ENCODE measurements at regions of chr1 and their contacts with region 1.

Region 1: GRCh38 chr1:23777979-23778814 is at the start of gene PITHD1:
- DNase-seq: peak; percentile 56 to 76
- H3K4me3 ChIP-seq: peak within 1 kb of the TSS; percentile 90
- H3K27ac ChIP-seq: peak within 1 kb of the TSS; percentile 81
- H3K4me1 ChIP-seq: peaks cover 29% of the 10 kb centered on the region
- H3K27me3 ChIP-seq: no peaks in the 10 kb centered on the region
- CTCF ChIP-seq: no peak
- total RNA-seq, gene PITHD1: 38.5 and 39.7 TPM in 2 replicates

Region 2: DNA sequence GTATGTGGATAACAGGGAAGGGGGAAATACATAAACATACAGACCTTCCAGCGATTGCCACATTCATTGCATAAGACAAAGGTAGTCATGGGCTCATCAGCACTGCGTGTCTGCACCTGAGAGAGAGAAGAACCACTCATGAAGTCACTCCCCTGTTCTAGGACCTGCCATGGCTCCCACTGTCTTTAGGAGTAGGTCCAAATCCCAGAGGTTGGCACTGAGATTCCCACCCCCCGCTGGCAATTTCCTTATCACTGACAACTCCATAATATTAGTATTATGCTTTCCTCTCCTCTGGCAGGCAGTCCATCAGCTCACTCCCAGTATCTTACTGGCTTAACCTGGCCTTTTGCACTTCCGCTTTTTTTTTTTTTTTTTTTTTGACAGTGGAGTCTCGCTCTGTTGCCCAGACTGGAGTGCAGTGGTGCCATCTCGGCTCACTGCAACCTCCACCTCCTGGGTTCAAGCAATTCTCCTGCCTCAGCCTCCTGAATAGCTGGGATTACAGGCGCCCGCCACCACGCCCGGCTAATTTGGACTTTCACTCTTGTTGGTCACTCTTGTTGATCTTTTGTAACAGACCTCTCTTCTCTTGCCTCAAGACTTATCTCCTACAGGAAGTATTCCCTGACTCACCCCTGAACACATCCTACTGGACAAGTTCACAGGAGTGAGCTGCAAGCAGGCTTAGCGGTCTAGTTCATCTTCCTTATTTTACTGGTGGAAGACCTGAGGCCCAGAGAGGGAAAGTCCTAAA is 393.7 kb before region 1 on chr1:
- CTCF ChIA-PET with region 1: interaction called, 11 read pairs
- POLR2A ChIA-PET with region 1: no interaction called
- intact Hi-C with region 1: no loop called
- DNase-seq: peak in 1 of 2 experiments; percentile 84
- H3K4me3 ChIP-seq: no peak overlapping the region
- H3K27ac ChIP-seq: no peak overlapping the region
- H3K4me1 ChIP-seq: peaks cover 6% of the 10 kb centered on the region; the same call in 1 of the 2 replicates
- H3K27me3 ChIP-seq: no peaks in the 10 kb centered on the region
- CTCF ChIP-seq: no peak

Region 3: DNA sequence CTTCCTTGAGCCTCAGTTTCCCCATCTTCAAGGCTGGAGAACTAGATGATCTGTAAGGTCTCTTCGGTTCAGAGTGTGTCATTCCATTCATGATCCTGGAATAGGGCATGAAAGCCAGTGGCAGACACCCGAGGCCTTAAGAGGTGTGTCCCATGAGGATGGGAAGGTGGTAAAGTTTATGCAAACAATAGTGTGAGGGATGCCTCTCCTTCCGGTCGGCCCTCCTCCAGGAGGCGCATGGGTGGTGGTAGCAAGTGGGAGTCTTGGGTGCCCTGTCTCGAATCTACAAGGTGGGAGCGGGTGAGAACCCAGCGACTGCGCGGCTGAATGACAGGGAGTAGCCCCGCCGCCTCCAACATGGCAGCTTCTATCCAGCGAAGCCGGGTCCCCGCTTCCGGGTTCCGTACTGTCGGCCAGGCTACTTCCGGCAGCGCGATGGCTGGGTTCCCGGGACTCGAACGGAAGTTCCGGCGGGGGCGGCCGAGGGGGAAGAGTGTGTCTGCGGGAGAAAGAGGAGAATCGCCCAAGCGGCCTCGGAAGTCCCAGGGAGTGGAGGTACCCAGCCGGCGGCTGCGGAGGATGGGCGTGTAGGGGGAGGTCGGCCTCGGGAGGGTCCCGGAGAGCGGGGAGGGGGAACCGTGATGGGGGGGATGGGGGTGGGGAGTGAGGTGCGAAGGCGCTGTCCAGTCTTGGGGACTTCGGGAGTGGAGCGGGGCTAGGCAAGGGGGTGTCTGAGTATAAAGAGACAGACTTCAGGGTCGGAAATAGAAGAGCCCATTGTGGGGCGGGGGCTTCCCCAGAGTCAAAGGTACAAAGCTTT is 12.7 kb after region 1 on chr1 and contains the start of gene LYPLA2:
- CTCF ChIA-PET with region 1: interaction called, 7 read pairs
- POLR2A ChIA-PET with region 1: interaction called, 12 read pairs
- intact Hi-C with region 1: loop called (anchors 1 kb)
- DNase-seq: peak; percentile 65 to 90
- H3K4me3 ChIP-seq: peak within 1 kb of the TSS; percentile 88
- H3K27ac ChIP-seq: peak within 1 kb of the TSS; percentile 80
- H3K4me1 ChIP-seq: peaks cover 15% of the 10 kb centered on the region
- H3K27me3 ChIP-seq: no peaks in the 10 kb centered on the region
- CTCF ChIP-seq: no peak
- total RNA-seq, gene LYPLA2: 90.1 and 94.9 TPM in 2 replicates

Region 4: DNA sequence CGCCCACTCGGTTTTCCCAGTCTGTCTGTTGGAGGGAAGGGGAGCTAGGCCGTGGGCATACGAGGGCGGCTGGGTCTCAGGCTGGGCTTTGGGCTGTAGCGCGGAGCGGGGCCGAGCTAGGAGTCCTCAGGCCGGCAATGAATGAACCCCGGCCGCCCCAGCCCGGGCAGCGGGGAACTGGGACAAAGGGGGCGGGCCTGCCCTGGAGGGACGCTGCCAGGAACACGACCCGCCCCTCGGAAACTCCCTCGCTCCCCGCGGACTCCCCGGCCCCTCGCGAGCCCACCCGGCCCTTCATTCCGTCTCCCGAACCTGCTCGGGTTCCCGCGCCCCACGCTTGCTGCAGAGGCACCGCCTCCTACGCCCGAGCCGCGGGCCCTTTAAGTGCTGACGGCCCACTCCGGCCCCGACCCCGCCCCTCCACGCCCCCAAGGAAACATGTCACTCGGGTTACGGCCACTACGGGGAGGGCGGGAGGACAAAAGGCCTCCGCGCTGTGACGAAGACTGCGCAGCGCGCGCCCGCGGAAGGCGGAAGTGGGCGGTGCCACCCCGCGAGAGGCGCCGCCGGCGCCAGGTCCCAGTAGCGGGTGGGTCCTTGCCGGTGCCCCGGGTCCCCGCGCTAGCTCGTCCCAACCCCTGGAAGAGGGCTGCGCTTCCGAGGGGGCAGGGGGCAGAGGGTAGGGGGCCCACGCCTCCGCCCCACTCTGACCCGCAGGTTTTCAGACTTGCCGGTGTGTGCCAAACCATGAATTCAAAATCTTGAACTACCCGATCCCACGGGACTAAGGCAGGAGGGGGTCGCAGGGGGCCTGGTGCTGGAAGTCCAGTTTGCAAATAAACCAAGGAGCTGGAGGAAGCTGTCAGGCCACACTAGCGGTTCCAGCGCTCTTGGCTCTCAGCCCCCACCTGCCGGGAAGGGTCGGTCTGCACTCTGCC is 22.5 kb after region 1 on chr1 and contains the start of gene GALE:
- CTCF ChIA-PET with region 1: no interaction called
- POLR2A ChIA-PET with region 1: interaction called, 10 read pairs
- intact Hi-C with region 1: loop called (anchors 2 kb)
- DNase-seq: peak; percentile 76 to 93
- H3K4me3 ChIP-seq: peak within 1 kb of the TSS; percentile 72
- H3K27ac ChIP-seq: peak within 1 kb of the TSS; percentile 85
- H3K4me1 ChIP-seq: peaks cover 14% of the 10 kb centered on the region
- H3K27me3 ChIP-seq: no peaks in the 10 kb centered on the region
- CTCF ChIP-seq: no peak
- total RNA-seq, gene GALE: 40.5 and 45.8 TPM in 2 replicates

Region 5: DNA sequence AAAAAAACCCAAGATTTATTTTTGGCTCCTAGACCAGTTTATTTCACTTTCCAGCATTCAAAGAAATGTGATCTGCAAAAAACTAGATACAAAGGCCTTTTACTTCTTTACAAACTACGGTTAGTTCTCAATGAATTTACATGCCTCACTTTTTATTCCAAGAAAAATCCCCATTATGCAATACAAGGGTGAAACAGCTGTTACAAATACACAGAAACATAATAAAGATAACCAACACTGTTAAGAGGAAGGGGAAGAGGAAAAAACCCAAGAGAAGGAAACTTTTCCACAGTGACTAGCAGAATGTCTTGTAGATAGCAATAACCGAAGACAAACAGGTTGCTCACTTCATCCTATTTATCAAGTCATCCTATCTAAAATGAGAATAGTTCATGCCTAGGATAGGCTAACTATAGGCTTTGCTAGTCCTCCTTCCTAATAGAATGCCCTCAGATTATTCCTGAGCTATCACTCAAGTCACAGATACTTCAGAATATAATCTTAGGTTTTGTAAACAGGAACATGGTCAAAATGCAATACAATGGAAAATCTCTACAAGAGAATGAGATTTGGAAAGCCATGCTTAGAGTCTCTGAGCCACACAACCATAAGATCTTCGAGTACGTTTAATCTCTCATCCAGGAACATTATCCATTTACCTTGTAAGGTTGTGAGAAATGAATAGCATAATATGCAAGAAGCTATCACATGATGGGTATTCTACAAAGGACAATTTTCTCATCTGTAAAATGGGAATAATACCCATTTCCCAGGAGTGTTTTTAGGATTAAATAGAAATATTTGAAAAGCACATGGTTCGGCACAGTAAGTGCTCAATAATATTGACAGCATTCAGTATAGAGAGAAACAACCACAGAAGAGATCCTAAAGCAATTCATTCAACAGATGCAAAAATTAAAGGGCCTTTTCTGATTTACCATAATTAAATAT is 186.9 kb after region 1 on chr1:
- CTCF ChIA-PET with region 1: no interaction called
- POLR2A ChIA-PET with region 1: interaction called, 11 read pairs
- intact Hi-C with region 1: no loop called
- DNase-seq: no peak
- H3K4me3 ChIP-seq: no peak overlapping the region
- H3K27ac ChIP-seq: peak overlapping the region; percentile 47
- H3K4me1 ChIP-seq: peaks cover 9% of the 10 kb centered on the region; the same call in 1 of the 2 replicates
- H3K27me3 ChIP-seq: no peaks in the 10 kb centered on the region
- CTCF ChIP-seq: no peak

Measured in PC-9 (cell line).